HepG2 (cell line): ENCODE measurements at regions of chr3 and their contacts with region 1.

Region 1: GRCh38 chr3:49839193-49839809 is 17.1 kb downstream of the TRAIP start:
- DNase-seq: peak; percentile 63
- ATAC-seq: peak; percentile 81
- H3K4me3 ChIP-seq: no peak overlapping the region
- H3K27ac ChIP-seq: no peak overlapping the region
- H3K4me1 ChIP-seq: peaks cover 30% of the 10 kb centered on the region
- H3K27me3 ChIP-seq: no peaks in the 10 kb centered on the region
- CTCF ChIP-seq: peak; percentile 90
- EP300 ChIP-seq: no peak
- POLR2A ChIP-seq: no peak
- RAD21 ChIP-seq: peak; percentile 78

Region 2: GRCh38 chr3:49177073-49177472 is 662.2 kb before region 1 on chr3:
- CTCF ChIA-PET with region 1: no interaction called
- POLR2A ChIA-PET with region 1: no interaction called
- in situ Hi-C with region 1: no loop called
- intact Hi-C with region 1: no loop called
- DNase-seq: no peak
- ATAC-seq: no peak
- H3K4me3 ChIP-seq: no peak overlapping the region
- H3K27ac ChIP-seq: no peak overlapping the region
- H3K4me1 ChIP-seq: peaks cover 37% of the 10 kb centered on the region
- H3K27me3 ChIP-seq: no peaks in the 10 kb centered on the region
- CTCF ChIP-seq: no peak
- EP300 ChIP-seq: no peak
- POLR2A ChIP-seq: no peak
- RAD21 ChIP-seq: no peak

Region 3: DNA sequence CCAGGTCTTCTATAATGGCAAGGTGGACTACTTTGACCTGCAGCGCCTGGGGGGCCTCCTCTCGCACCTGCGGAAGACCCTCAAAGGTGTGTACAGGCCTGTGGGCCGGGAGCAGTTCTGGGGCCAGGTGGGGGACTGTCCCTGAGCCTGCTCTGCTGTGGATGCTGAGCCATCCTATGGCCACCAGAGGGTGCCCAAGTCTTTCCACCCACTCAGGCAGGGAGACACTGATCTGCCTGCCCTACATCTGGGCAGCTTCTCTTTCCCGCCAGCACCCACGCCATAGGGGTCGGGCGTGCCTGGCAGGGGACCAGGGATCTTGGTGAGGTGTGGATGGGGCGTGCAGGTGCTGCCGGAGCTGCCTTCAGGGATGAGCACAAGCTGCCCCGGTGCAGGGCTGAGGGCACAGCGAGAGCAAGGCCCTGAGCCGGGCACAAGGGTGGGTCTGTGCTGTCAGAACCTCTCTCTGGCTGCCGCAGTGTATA is 135.8 kb before region 1 on chr3:
- CTCF ChIA-PET with region 1: interaction called, 14 read pairs
- POLR2A ChIA-PET with region 1: no interaction called
- in situ Hi-C with region 1: loop called (anchors 5 kb)
- intact Hi-C with region 1: loop called (anchors 1 kb)
- DNase-seq: peak; percentile 60
- ATAC-seq: peak; percentile 87
- H3K4me3 ChIP-seq: no peak overlapping the region
- H3K27ac ChIP-seq: no peak overlapping the region
- H3K4me1 ChIP-seq: no peaks in the 10 kb centered on the region
- H3K27me3 ChIP-seq: no peaks in the 10 kb centered on the region; a peak in 1 of 5 replicates
- CTCF ChIP-seq: peak; percentile 95
- EP300 ChIP-seq: no peak
- POLR2A ChIP-seq: no peak
- RAD21 ChIP-seq: peak; percentile 85

Region 4: GRCh38 chr3:49802719-49803464 is 36.4 kb before region 1 on chr3 and contains the start of gene INKA1:
- CTCF ChIA-PET with region 1: interaction called, 27 read pairs
- POLR2A ChIA-PET with region 1: interaction called, 4 read pairs
- in situ Hi-C with region 1: loop called (anchors 5 kb)
- intact Hi-C with region 1: loop called (anchors 1 kb)
- DNase-seq: peak; percentile 75
- ATAC-seq: peak; percentile 77
- H3K4me3 ChIP-seq: peak within 1 kb of the TSS; percentile 73 to 89 (median 85)
- H3K27ac ChIP-seq: no peak within 1 kb of the TSS
- H3K4me1 ChIP-seq: peaks cover 78% of the 10 kb centered on the region
- H3K27me3 ChIP-seq: peaks cover 0 to 12% of the 10 kb centered on the region in 2 experiments; a peak in 3 of 5 replicates
- CTCF ChIP-seq: peak; percentile 100
- EP300 ChIP-seq: no peak
- POLR2A ChIP-seq: no peak
- RAD21 ChIP-seq: peak; percentile 98
- total RNA-seq, gene INKA1: 0.22 TPM in 1 of 2 replicates, not detected in the other

Region 5: DNA sequence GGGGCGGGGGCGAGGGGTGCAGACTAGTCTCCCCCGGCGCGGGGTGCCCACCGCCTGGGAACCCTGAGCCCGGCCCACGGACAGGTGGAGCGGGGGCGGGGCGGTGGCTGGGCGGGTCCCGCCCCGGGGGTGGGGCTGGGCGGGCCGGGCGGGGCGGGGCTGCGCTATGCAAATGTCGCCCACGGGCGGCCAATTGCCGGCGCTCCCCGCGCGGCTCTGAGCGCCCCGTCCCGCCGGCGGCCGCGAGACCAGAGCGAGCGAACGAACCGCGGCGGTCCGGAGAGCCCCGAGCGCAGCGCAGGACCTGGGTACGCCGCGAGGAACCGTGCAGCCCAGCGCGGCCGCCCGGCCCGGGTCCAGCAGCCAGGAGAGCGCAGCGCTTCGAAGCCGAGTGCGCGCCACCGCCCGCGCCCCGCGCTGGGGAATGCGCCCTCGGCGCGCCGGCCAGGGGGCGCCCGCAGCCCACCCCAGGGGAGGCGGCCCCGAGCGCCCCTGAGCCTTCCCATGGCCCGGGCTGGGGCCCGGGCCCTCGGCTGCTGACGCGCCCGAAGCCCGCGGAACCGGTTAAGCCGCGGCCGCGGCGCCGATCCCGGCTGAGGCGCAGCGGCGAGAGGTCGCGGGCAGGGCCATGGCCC is 315.7 kb after region 1 on chr3 and contains the start of gene SEMA3F:
- CTCF ChIA-PET with region 1: no interaction called
- POLR2A ChIA-PET with region 1: no interaction called
- in situ Hi-C with region 1: no loop called
- intact Hi-C with region 1: no loop called
- DNase-seq: peak; percentile 32
- ATAC-seq: peak; percentile 76
- H3K4me3 ChIP-seq: peak within 1 kb of the TSS; percentile 67 to 84 (median 81)
- H3K27ac ChIP-seq: no peak within 1 kb of the TSS
- H3K4me1 ChIP-seq: peaks cover 75% of the 10 kb centered on the region
- H3K27me3 ChIP-seq: peaks cover 0 to 15% of the 10 kb centered on the region in 2 experiments; a peak in 2 of 5 replicates
- CTCF ChIP-seq: peak; percentile 53; the same call in 1 of the 2 replicates
- EP300 ChIP-seq: no peak
- POLR2A ChIP-seq: 0 out of 4 replicates have a peak, but pooled peaks of 1 of the 2 experiments have one; percentile 32
- RAD21 ChIP-seq: peak; percentile 97
- total RNA-seq, gene SEMA3F: 3.6 and 7.6 TPM in 2 replicates

Region 6: GRCh38 chr3:50388016-50388719 is 548.9 kb after region 1 on chr3:
- CTCF ChIA-PET with region 1: no interaction called
- POLR2A ChIA-PET with region 1: no interaction called
- in situ Hi-C with region 1: no loop called
- intact Hi-C with region 1: no loop called
- DNase-seq: no peak
- ATAC-seq: peak; percentile 86
- H3K4me3 ChIP-seq: no peak overlapping the region
- H3K27ac ChIP-seq: no peak overlapping the region
- H3K4me1 ChIP-seq: peaks cover 9% of the 10 kb centered on the region
- H3K27me3 ChIP-seq: peaks cover 12 to 72% of the 10 kb centered on the region in 2 experiments
- CTCF ChIP-seq: peak; percentile 73
- EP300 ChIP-seq: no peak
- POLR2A ChIP-seq: no peak
- RAD21 ChIP-seq: peak; percentile 53; the same call in 1 of the 2 replicates